ENCODE measurements at regions of chr4 and their contacts with region 1.

Region 1: GRCh38 chr4:7206911-7207567 is 14.7 kb downstream of the SORCS2 start:
- DNase-seq: peak; percentile 88
- ATAC-seq: peak; percentile 96 to 97

Region 2: GRCh38 chr4:7134737-7135388 is 72.2 kb before region 1 on chr4:
- intact Hi-C with region 1: no loop called
- DNase-seq: peak; percentile 65
- ATAC-seq: peak; percentile 79 to 85

Region 3: DNA sequence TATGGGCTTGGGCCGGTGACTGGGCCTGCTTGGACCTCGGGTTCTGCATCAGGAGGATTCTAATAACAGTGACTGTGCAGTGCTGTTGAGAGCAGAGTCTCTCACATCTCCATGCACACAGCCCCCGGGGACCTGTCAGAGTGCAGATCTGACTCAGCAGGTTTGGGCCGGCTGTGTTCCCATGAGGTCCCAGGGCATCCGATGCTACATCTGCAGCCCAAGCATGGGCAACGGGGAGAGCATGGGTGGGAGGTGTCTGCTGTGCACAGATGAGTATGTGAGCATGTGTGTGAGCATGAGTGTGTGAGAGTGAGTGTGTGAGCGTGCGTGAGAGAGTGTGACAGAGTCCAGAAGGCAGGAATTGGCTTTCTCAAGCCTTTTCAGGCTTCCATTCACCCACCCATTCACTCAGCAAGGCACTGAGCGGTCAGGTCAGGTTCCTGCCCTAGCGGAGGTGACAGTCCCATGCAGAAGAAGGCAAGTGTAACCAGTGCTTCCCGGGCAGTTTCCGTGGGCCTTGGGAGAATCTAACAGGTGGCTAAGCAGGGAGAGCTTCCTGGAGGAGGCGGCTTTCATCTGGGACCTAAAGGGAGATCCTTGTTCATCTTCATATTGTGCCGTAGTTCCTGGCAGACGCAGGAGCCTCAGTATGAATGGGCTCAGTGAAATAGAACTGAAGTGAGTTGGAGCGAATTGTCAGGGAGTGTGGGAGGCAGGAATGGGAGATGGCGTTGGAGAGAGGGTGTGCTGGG is 47.9 kb after region 1 on chr4:
- intact Hi-C with region 1: loop called in 1 of 2 experiments (anchors 10 kb)
- DNase-seq: no peak
- ATAC-seq: no peak

Region 4: GRCh38 chr4:7365462-7366179 is 158.6 kb after region 1 on chr4:
- intact Hi-C with region 1: no loop called
- DNase-seq: no peak
- ATAC-seq: peak; percentile 85 to 87